IMR-90 (cell line): ENCODE measurements at regions of chr14 and their contacts with region 1.

Region 1: GRCh38 chr14:24141097-24141880 is at the start of gene EMC9:
- DNase-seq: peak; percentile 99
- ATAC-seq: peak; percentile 92
- H3K4me3 ChIP-seq: peak within 1 kb of the TSS; percentile 68
- H3K27ac ChIP-seq: peak within 1 kb of the TSS; percentile 80
- H3K4me1 ChIP-seq: peaks cover 15% of the 10 kb centered on the region
- H3K27me3 ChIP-seq: no peaks in the 10 kb centered on the region
- CTCF ChIP-seq: peak; percentile 32
- POLR2A ChIP-seq: peak; percentile 84
- RAD21 ChIP-seq: no peak
- total RNA-seq, gene EMC9: 15.0 and 15.1 TPM in 2 replicates

Region 2: GRCh38 chr14:23095196-23096108 is 1045.8 kb before region 1 on chr14 and contains the start of gene C14orf119:
- CTCF ChIA-PET with region 1: no interaction called
- POLR2A ChIA-PET with region 1: no interaction called
- dilution Hi-C with region 1: no loop called
- in situ Hi-C with region 1: loop called (anchors 25 kb)
- intact Hi-C with region 1: no loop called
- DNase-seq: peak; percentile 99
- ATAC-seq: peak; percentile 91
- H3K4me3 ChIP-seq: peak within 1 kb of the TSS; percentile 67
- H3K27ac ChIP-seq: peak within 1 kb of the TSS; percentile 97
- H3K4me1 ChIP-seq: peaks cover 3% of the 10 kb centered on the region; the same call in 1 of the 2 replicates
- H3K27me3 ChIP-seq: no peaks in the 10 kb centered on the region
- CTCF ChIP-seq: no peak
- POLR2A ChIP-seq: peak; percentile 91; the same call in 1 of the 2 replicates
- RAD21 ChIP-seq: no peak
- total RNA-seq, gene C14orf119: 61.9 and 83.7 TPM in 2 replicates

Region 3: DNA sequence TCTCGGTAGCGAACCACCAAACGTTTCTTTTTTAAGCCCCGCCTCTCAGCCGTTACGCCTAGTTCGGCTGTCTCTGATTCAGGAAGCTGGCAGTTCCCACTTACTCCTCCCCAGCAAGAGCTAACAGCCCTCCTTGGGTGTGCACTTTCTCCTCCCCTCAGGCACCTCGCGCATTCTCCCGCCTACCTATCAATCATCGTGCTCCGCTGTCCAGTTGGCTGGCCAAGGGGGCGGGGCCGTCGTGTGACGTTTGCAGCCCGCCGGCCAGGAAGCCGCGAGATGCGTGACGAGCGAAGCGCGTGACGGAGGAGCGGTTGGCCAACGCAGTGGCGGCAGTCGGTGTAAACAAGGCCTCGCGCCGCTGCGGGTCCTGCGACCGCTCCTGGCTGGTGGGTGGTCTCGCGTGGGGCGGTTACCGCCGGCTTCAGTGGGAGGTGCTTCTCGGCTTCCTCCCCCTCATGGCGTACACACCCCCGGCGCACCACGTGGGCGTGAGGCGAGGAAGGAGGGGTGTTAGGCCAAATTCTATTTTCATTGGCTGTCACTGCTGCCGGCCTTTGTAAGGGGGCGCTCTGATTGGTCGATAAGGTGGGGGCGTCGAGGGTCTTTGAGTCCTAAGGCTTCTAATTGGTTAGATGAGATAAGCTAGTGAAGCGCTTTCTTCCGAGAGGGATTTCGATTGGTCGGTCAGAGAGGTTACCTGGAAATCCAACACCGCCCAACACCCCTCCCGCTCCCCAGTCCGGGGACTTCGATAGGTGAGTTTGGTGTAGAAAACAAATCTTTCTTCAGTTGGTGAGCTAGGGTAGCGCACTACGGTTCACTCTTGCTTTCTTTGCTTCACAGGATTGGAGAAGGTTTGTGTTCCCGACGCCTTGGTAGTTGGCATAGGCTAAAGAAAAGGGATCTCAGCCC is 26.5 kb before region 1 on chr14 and contains the starts of genes DCAF11 and NRL:
- CTCF ChIA-PET with region 1: no interaction called
- POLR2A ChIA-PET with region 1: interaction called, 7 read pairs
- dilution Hi-C with region 1: no loop called
- in situ Hi-C with region 1: no loop called
- intact Hi-C with region 1: loop called (anchors 2 kb)
- DNase-seq: peak; percentile 100
- ATAC-seq: peak; percentile 90
- H3K4me3 ChIP-seq: peak within 1 kb of the TSS; percentile 74
- H3K27ac ChIP-seq: peak within 1 kb of the TSS; percentile 91
- H3K4me1 ChIP-seq: peaks cover 3% of the 10 kb centered on the region; the same call in 1 of the 2 replicates
- H3K27me3 ChIP-seq: no peaks in the 10 kb centered on the region
- CTCF ChIP-seq: no peak
- POLR2A ChIP-seq: peak; percentile 30; the same call in 1 of the 2 replicates
- RAD21 ChIP-seq: no peak
- total RNA-seq, gene DCAF11: 46.7 and 52.0 TPM in 2 replicates
- total RNA-seq, gene NRL: 0.18 and 0.28 TPM in 2 replicates

Region 4: GRCh38 chr14:24171422-24172260 is 30.4 kb after region 1 on chr14 and contains the start of gene REC8:
- CTCF ChIA-PET with region 1: no interaction called
- POLR2A ChIA-PET with region 1: no interaction called
- dilution Hi-C with region 1: no loop called
- in situ Hi-C with region 1: no loop called
- intact Hi-C with region 1: no loop called
- DNase-seq: no peak
- ATAC-seq: no peak
- H3K4me3 ChIP-seq: no peak within 1 kb of the TSS
- H3K27ac ChIP-seq: no peak within 1 kb of the TSS
- H3K4me1 ChIP-seq: no peaks in the 10 kb centered on the region
- H3K27me3 ChIP-seq: no peaks in the 10 kb centered on the region
- CTCF ChIP-seq: no peak
- POLR2A ChIP-seq: no peak
- RAD21 ChIP-seq: no peak
- total RNA-seq, gene REC8: 0.36 and 0.56 TPM in 2 replicates